Mammary epithelial cell (primary cell): ENCODE measurements at regions of chr17 and their contacts with region 1.

Region 1: GRCh38 chr17:82037113-82037888 is at the start of gene DCXR:
- DNase-seq: peak; percentile 96
- H3K4me3 ChIP-seq: peak within 1 kb of the TSS; percentile 68 to 84 (median 73)
- H3K27ac ChIP-seq: peak within 1 kb of the TSS; percentile 31
- H3K4me1 ChIP-seq: peaks cover 16% of the 10 kb centered on the region
- H3K27me3 ChIP-seq: no peaks in the 10 kb centered on the region
- CTCF ChIP-seq: peak; percentile 50 to 80
- total RNA-seq, gene DCXR: 27.7 to 68.9 TPM

Region 2: DNA sequence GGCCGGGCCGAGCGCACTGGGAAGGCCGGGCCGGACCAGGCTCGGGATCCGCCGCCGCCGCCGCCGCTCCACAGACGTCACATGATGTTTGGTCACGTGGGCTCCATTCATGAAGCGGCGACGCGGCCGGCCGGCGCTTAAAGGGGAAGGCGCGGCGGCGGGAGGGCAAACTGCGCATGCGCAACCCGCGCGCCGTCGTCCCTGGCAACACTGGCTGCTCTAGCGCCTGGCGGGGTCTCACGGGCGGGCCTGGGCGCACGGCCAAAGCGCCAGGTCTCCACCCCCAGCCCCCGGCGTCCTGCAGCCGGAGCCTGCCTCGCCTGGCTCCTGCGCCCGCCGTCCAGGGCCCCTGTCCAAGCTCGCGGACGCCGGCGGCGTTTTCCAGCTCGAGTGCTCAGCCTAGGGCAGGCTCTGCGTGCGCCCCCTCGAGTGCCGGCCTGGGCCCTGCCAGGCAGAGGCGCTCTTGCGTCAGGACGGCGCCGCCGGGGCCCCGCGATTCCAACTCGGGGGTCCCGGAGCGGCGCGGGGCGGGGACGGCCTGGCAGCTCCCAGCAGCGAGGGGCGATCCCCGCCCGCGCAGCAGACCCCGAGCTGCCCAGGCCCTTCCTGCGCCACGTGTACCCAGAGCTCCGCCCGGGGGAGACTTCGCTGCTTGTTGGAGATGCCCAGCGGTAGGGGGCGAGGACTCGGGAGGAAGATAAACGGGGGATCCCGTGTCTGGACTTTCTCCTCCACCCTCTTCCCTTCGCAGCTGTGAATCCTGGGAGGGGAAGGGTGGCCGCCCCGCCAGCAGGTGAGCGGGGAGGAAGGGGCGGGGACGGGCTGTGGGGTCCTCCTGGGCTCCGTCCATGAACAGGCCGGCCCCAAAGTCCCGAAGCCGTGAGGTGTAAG is 109.4 kb before region 1 on chr17 and contains the start of gene MAFG:
- CTCF ChIA-PET with region 1: no interaction called
- dilution Hi-C with region 1: no loop called
- in situ Hi-C with region 1: no loop called
- intact Hi-C with region 1: no loop called
- DNase-seq: peak; percentile 87
- H3K4me3 ChIP-seq: peak within 1 kb of the TSS; percentile 70 to 81 (median 72)
- H3K27ac ChIP-seq: peak within 1 kb of the TSS; percentile 73
- H3K4me1 ChIP-seq: peaks cover 37% of the 10 kb centered on the region
- H3K27me3 ChIP-seq: no peaks in the 10 kb centered on the region
- CTCF ChIP-seq: peak in 1 of 2 donors; percentile 27
- total RNA-seq, gene MAFG: 19.8 to 27.9 TPM

Region 3: DNA sequence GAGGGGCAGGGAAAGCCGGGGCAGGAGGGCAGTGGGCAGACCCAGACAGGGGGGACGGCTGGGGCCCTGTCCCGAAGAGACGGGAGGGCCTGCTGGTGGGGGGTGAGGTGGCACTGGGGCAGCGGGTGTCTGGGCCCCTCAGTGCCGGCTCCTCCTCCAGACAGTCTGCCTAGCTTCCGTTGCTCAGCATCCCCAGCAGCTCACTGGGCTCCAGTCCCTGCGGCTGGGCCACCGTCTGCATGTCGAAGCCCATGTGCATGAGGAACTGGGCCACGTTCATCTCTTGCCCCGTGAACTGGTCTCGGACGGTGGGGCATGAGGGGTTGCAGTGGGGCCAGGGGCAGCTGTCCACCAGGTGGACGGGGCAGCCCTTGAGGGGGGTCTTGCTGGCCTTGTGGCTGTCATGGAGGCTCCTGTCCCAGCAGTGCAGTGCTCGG is 84.5 kb before region 1 on chr17:
- CTCF ChIA-PET with region 1: no interaction called
- dilution Hi-C with region 1: loop called (anchors 5 kb)
- in situ Hi-C with region 1: no loop called
- intact Hi-C with region 1: no loop called
- DNase-seq: no peak
- H3K4me3 ChIP-seq: no peak overlapping the region
- H3K27ac ChIP-seq: no peak overlapping the region
- H3K4me1 ChIP-seq: no peaks in the 10 kb centered on the region
- H3K27me3 ChIP-seq: no peaks in the 10 kb centered on the region
- CTCF ChIP-seq: no peak

Region 4: DNA sequence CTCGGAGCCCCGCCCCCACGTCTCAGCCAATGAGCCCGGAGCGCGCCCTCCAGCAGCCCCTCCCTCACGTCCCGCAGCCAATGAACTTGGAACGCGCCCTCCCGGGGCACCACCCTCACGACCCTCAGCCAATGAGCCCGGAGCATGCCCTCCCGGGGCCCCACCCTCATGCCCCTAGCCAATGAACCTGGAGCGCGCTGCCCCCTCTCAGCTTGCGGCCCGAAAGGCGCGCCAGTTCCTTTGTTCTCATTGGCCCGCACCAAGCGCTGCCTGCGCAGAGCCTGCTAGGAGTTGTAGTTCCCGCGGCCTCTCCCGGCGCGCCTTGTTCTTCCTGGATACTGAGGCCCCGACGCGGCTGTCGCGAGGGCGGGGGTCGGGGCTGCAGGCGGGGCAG is 14.3 kb before region 1 on chr17 and contains the start of gene LRRC45:
- CTCF ChIA-PET with region 1: interaction called, 12 read pairs
- dilution Hi-C with region 1: no loop called
- in situ Hi-C with region 1: no loop called
- intact Hi-C with region 1: no loop called
- DNase-seq: peak; percentile 100
- H3K4me3 ChIP-seq: peak within 1 kb of the TSS; percentile 63 to 92 (median 88)
- H3K27ac ChIP-seq: peak within 1 kb of the TSS; percentile 15
- H3K4me1 ChIP-seq: peaks cover 32% of the 10 kb centered on the region
- H3K27me3 ChIP-seq: no peaks in the 10 kb centered on the region
- CTCF ChIP-seq: no peak
- total RNA-seq, gene LRRC45: 4.5 to 10.9 TPM

Region 5: DNA sequence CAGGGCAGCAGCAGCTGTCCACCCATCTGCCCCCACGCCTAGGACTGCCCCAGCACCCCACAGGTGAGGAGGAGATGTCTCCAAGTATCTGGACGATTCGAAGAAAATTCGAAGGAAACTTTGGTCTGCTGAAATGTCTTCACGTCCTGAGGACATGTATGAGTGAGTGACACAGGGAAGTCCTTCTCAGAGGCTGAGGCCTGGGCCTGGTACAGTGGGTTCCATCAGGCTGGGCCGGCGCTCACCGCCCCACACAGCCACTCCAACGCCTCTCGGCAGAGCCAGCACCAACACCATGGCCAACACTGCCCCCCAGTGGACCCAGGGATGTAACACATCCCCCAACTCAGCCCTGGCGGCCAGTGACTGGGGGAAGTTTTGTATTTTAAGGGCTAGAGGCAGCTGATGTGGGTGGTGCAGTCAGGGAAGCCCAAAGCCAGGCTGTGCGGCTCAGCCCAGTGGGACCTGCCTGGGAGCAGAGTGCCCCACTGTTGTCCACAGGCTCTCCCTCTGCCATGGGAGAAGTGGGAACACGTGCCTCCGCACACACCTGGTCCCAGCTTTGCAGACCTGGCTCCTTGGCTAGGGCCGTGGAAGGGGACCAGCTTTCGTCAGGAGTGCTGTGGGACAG is 116.6 kb after region 1 on chr17:
- CTCF ChIA-PET with region 1: no interaction called
- dilution Hi-C with region 1: no loop called
- in situ Hi-C with region 1: loop called (anchors 5 to 25 kb)
- intact Hi-C with region 1: no loop called
- DNase-seq: peak; percentile 64
- H3K4me3 ChIP-seq: no peak overlapping the region
- H3K27ac ChIP-seq: no peak overlapping the region
- H3K4me1 ChIP-seq: no peaks in the 10 kb centered on the region
- H3K27me3 ChIP-seq: no peaks in the 10 kb centered on the region
- CTCF ChIP-seq: peak; percentile 86 to 93

Region 6: DNA sequence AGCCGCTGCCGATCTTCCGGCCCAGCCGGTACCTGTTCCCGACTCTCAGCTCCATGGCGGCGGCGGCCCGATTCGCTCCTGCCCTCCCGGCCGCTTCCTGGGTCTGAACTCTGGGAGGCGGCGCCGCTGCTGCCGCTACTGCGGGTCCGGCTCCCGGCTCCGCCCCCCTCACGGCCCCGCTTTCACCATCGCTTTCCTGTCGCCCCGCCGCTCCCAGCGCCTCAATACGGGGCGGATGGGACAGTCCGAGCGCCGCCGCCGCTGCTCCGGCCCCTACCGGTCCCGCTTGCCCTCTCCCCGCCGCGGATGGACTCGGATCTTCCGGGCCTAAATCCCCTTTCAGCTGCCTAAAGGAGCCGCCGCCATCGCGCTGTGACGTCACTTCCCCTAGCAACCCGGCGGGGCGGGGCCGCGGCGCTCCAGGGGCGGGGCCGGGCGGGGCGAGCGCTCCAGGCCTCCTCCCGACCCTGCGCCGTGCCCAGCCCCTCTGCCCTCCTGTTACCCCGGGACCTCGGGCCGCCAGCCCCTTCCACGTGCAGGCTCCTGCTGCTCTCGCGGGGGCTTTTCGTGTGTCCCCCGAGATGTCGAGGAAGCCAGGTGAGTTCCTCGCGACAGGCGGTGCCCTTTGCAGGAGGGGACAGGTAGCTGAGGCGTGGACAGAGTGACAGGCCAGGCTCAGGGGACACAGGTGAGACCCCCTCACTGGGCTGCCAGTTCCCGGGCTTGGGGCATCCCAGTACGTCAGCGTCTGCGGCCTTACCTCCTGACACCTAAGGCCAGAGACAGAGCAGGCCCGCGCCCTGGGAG is 236.2 kb after region 1 on chr17 and contains the start of gene CSNK1D:
- CTCF ChIA-PET with region 1: no interaction called
- dilution Hi-C with region 1: loop called (anchors 10 kb)
- in situ Hi-C with region 1: no loop called
- intact Hi-C with region 1: no loop called
- DNase-seq: peak; percentile 85
- H3K4me3 ChIP-seq: peak within 1 kb of the TSS; percentile 74 to 84 (median 81)
- H3K27ac ChIP-seq: peak within 1 kb of the TSS; percentile 69
- H3K4me1 ChIP-seq: peaks cover 33% of the 10 kb centered on the region
- H3K27me3 ChIP-seq: no peaks in the 10 kb centered on the region
- CTCF ChIP-seq: no peak
- total RNA-seq, gene CSNK1D: 68.7 to 163 TPM

Region 7: GRCh38 chr17:82551779-82552457 is 514.6 kb after region 1 on chr17:
- CTCF ChIA-PET with region 1: no interaction called
- dilution Hi-C with region 1: no loop called
- in situ Hi-C with region 1: loop called in 1 of 2 experiments (anchors 25 kb)
- intact Hi-C with region 1: no loop called
- DNase-seq: peak; percentile 74
- H3K4me3 ChIP-seq: no peak overlapping the region
- H3K27ac ChIP-seq: no peak overlapping the region
- H3K4me1 ChIP-seq: peaks cover 12% of the 10 kb centered on the region
- H3K27me3 ChIP-seq: no peaks in the 10 kb centered on the region
- CTCF ChIP-seq: peak; percentile 63 to 86